B cell (primary cell): ENCODE measurements at regions of chr1 and their contacts with region 1.

Region 1: DNA sequence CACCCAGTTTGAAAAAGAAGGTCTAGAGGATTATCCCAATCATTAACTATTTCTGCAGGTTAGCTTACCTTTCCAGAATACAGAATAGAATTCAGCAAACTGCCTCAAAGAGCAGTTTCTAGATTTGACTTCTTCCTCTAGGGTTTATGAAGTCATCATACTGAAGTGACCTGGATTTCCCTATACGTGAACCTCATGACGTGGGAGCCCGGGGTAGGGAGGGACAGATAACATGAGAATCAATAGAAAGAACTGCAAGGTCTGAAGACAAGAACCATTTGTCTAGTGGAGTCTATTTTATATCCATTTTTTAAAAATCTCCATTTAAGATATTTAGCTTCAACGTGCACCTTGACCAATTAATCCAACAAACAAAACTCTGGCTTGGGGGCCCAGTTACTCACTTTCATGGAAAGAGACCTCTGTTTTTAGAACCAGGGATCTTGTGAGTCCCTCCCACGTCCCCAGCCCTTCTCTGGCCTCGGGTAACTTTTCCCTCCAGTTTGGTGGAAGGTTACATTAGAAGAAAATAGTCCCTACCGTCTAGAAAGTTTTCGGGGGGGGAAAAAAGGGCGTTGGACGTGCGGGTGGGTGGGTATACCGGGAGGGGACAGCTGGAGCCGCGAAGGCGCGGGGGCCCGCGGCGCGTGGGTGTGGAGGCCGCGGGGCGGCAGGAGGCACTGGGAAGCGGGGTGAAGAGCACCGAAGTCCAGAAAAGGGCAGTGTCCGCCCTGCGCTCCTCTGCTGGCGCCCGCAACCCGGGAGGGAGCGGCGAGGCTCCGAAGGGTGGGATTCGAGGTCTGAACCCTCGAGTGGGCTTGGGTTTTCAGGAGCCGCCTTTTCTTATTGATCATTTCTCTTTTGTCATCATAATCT is 13.8 kb upstream of the POGZ start:
- DNase-seq: peak; percentile 70
- ATAC-seq: peak; percentile 45
- H3K4me3 ChIP-seq: peak overlapping the region in 4 of 5 experiments; percentile 51 to 68 (median 60)
- H3K4me3 Mint-ChIP-seq: peak overlapping the region; percentile 82
- H3K27ac ChIP-seq: peak overlapping the region; percentile 26 to 62
- H3K27ac Mint-ChIP-seq: peak overlapping the region; percentile 86
- H3K4me1 ChIP-seq: peaks cover 0 to 12% of the 10 kb centered on the region in 2 donors
- H3K4me1 Mint-ChIP-seq: peaks cover 7% of the 10 kb centered on the region
- H3K27me3 ChIP-seq: peaks cover 0 to 2% (median 0%) of the 10 kb centered on the region in 4 experiments
- H3K27me3 Mint-ChIP-seq: peaks cover 12% of the 10 kb centered on the region
- CTCF ChIP-seq: no peak

Region 2: DNA sequence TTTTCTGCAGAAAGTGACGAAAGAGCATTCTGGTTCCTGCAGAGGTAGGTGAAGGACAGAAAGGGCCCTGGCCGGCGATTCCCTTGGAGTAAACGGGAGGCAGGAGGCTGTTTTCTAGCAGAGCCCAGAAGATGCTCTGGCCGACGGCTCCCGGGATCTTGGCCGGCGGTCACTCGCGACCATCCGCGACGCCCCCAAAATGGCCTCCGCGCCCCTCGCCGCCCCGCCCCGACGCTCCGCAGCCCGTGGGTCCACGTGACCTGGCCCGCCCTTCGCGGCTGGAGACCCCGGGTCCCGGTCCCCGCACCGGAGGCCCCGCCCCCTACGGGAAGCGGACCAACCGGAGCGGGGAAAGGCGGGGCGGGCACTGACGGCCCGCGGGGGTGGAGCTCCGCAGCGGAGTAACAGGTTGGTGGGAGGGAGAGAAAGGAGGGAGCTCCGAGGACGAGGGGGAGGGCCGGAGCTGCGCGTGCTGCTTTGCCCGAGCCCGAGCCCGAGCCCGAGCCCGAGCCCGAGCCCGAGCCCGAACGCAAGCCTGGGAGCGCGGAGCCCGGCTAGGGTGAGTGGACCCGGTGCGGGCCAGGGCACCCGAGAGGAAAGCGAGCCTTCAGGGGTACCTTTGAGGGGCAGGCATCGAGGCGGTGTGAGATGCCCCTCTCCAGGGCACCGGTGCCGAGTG is 38.0 kb after region 1 on chr1 and contains the start of gene CGN:
- CTCF ChIA-PET with region 1: interaction called, 5 read pairs
- POLR2A ChIA-PET with region 1: no interaction called
- intact Hi-C with region 1: loop called (anchors 1 kb)
- DNase-seq: peak; percentile 87
- ATAC-seq: peak; percentile 98
- H3K4me3 ChIP-seq: peak within 1 kb of the TSS; percentile 66 to 85 (median 77)
- H3K4me3 Mint-ChIP-seq: peak within 1 kb of the TSS; percentile 96
- H3K27ac ChIP-seq: no peak within 1 kb of the TSS
- H3K27ac Mint-ChIP-seq: peak within 1 kb of the TSS; percentile 78
- H3K4me1 ChIP-seq: peaks cover 16 to 23% of the 10 kb centered on the region in 2 donors
- H3K4me1 Mint-ChIP-seq: peaks cover 15% of the 10 kb centered on the region
- H3K27me3 ChIP-seq: peaks cover 0 to 12% (median 2%) of the 10 kb centered on the region in 4 experiments
- H3K27me3 Mint-ChIP-seq: no peaks in the 10 kb centered on the region
- CTCF ChIP-seq: no peak
- total RNA-seq, gene CGN: 0.49 and 0.81 TPM in 2 replicates

Region 3: GRCh38 chr1:151547119-151547899 is 74.2 kb after region 1 on chr1:
- CTCF ChIA-PET with region 1: no interaction called
- POLR2A ChIA-PET with region 1: no interaction called
- intact Hi-C with region 1: no loop called
- DNase-seq: no peak
- ATAC-seq: no peak
- H3K4me3 ChIP-seq: no peak overlapping the region
- H3K4me3 Mint-ChIP-seq: no peak overlapping the region
- H3K27ac ChIP-seq: no peak overlapping the region
- H3K27ac Mint-ChIP-seq: no peak overlapping the region
- H3K4me1 ChIP-seq: no peaks in the 10 kb centered on the region
- H3K4me1 Mint-ChIP-seq: no peaks in the 10 kb centered on the region
- H3K27me3 ChIP-seq: peaks cover 0 to 11% (median 3%) of the 10 kb centered on the region in 4 experiments
- H3K27me3 Mint-ChIP-seq: peaks cover 12% of the 10 kb centered on the region
- CTCF ChIP-seq: no peak

Region 4: GRCh38 chr1:151693076-151693651 is 220.1 kb after region 1 on chr1:
- CTCF ChIA-PET with region 1: no interaction called
- POLR2A ChIA-PET with region 1: no interaction called
- intact Hi-C with region 1: no loop called
- DNase-seq: no peak
- ATAC-seq: no peak
- H3K4me3 ChIP-seq: no peak overlapping the region
- H3K4me3 Mint-ChIP-seq: no peak overlapping the region
- H3K27ac ChIP-seq: no peak overlapping the region
- H3K27ac Mint-ChIP-seq: no peak overlapping the region
- H3K4me1 ChIP-seq: no peaks in the 10 kb centered on the region
- H3K4me1 Mint-ChIP-seq: no peaks in the 10 kb centered on the region
- H3K27me3 ChIP-seq: no peaks in the 10 kb centered on the region
- H3K27me3 Mint-ChIP-seq: no peaks in the 10 kb centered on the region
- CTCF ChIP-seq: no peak